H1 (cell line): ENCODE measurements at regions of chr5 and their contacts with region 1.

Region 1: GRCh38 chr5:10452768-10453331 is 11.2 kb downstream of the ROPN1L start:
- DNase-seq: no peak
- H3K4me3 ChIP-seq: no peak overlapping the region
- H3K27ac ChIP-seq: no peak overlapping the region
- H3K4me1 ChIP-seq: peaks cover 3 to 14% (median 7%) of the 10 kb centered on the region in 4 experiments
- H3K27me3 ChIP-seq: no peaks in the 10 kb centered on the region
- CTCF ChIP-seq: peak in 2 of 3 experiments; percentile 74 to 79; a peak in 3 of 4 replicates
- EP300 ChIP-seq: no peak
- POLR2A ChIP-seq: no peak
- RAD21 ChIP-seq: peak; percentile 98 to 99

Region 2: DNA sequence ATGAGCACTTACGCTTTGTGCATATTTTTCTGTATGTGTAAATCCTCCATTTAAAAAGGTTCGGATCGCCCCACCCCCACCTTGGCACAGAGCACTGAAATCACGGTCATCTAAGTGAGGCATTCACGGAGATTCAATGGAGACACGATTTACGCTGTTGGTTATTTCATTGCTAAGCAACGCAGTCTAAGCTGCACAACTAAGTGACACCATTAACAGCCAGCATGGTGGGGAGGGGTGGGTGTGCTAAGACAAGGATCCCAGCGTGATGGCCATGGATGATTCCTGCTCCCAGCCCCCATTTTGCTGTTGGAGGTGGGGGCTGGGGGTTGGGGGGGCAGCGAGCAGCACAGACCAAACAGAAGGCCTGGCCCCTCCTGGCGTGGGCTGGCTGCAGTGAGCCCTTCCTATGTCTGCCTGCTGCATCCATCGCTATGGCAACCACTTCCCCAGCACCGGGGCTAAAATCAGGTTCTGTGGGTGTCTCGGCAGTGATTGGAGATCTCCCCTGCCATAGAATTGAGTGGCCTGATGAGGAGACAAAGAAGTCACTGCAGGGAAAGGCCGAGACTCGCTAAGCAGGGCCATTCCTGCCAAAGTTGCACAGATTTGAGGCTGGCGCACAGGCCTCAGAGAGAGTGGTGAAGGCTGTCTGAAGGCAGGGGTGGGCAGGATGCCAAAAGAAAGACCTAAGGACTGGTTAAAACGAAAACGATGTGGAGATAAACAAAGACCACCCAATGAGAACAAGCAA is 113.6 kb before region 1 on chr5:
- CTCF ChIA-PET with region 1: no interaction called
- POLR2A ChIA-PET with region 1: no interaction called
- DNase-seq: no peak
- H3K4me3 ChIP-seq: no peak overlapping the region
- H3K27ac ChIP-seq: no peak overlapping the region
- H3K4me1 ChIP-seq: peaks cover 0 to 14% (median 5%) of the 10 kb centered on the region in 4 experiments; a peak in 4 of 7 replicates
- H3K27me3 ChIP-seq: peaks cover 7 to 10% (median 8%) of the 10 kb centered on the region in 4 experiments
- CTCF ChIP-seq: no peak
- EP300 ChIP-seq: no peak
- POLR2A ChIP-seq: no peak
- RAD21 ChIP-seq: no peak

Region 3: DNA sequence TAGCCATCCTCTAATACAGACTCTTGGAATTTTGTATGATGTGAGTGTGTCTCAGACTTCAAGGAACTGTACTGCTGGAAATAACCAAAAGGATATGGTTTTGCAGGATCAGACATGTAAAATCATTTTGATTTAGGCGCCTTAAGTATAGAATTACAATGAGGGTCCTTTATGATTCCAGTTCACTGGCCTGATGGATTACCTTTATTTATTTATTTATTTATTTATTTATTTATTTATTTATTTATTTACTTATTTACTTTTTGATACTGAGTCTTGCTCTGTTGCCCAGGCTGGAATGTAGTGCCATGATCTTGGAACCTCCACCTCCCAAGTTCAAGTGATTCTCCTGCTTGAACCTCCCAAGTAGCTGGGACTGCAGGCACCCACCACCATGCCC is 49.0 kb before region 1 on chr5:
- CTCF ChIA-PET with region 1: no interaction called
- POLR2A ChIA-PET with region 1: no interaction called
- DNase-seq: no peak
- H3K4me3 ChIP-seq: no peak overlapping the region
- H3K27ac ChIP-seq: no peak overlapping the region
- H3K4me1 ChIP-seq: no peaks in the 10 kb centered on the region
- H3K27me3 ChIP-seq: no peaks in the 10 kb centered on the region
- CTCF ChIP-seq: no peak
- EP300 ChIP-seq: no peak
- POLR2A ChIP-seq: no peak
- RAD21 ChIP-seq: no peak

Region 4: DNA sequence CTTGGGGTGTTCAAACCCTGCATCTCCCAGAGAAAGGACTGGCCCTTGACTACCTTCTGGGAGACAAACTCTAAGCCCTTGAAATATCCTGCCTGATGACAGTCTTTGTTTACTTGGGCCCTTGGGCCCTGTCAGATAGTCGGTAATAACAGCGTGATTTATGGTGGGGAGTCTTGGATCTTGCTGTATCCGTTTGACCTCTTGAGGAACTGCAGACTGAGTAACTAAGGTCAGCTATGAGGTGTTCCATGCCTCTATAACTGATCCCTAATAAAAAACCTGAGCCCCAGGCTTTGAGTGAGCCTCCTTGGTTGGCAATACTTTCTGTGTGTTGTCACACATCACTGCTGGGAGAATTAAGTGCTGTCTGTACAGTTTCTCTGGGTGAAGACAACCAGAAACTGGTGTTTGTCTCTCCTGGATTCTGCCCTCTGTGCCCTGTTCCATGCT is 54.8 kb after region 1 on chr5:
- CTCF ChIA-PET with region 1: interaction called, 29 read pairs
- POLR2A ChIA-PET with region 1: no interaction called
- DNase-seq: no peak
- H3K4me3 ChIP-seq: no peak overlapping the region
- H3K27ac ChIP-seq: no peak overlapping the region
- H3K4me1 ChIP-seq: peaks cover 0 to under 1% (median 0%) of the 10 kb centered on the region in 4 experiments; a peak in 2 of 7 replicates
- H3K27me3 ChIP-seq: no peaks in the 10 kb centered on the region
- CTCF ChIP-seq: no peak
- EP300 ChIP-seq: no peak
- POLR2A ChIP-seq: no peak
- RAD21 ChIP-seq: no peak

Region 5: DNA sequence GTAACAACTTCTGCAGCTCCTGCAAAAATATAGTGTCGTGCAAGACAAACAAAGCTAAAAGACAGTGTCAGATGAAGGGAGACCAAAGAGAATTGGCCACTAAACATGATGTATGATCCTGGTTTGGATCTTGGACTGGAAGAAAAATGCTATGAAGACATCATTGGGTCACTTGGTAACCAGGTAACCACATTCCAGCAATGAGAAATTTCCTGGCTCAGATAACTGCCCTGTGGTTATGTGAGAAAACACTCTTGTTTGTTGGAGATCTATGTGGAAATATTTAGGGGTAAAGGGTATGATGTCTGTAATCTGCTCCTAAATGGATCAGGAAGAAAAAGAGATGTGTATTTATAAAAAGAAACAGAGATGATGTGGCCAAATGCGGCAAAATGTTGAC is 65.5 kb after region 1 on chr5:
- CTCF ChIA-PET with region 1: no interaction called
- POLR2A ChIA-PET with region 1: no interaction called
- DNase-seq: no peak
- H3K4me3 ChIP-seq: no peak overlapping the region
- H3K27ac ChIP-seq: no peak overlapping the region
- H3K4me1 ChIP-seq: peaks cover 0 to 8% (median 6%) of the 10 kb centered on the region in 4 experiments; a peak in 4 of 7 replicates
- H3K27me3 ChIP-seq: no peaks in the 10 kb centered on the region
- CTCF ChIP-seq: no peak
- EP300 ChIP-seq: no peak
- POLR2A ChIP-seq: no peak
- RAD21 ChIP-seq: no peak

Region 6: GRCh38 chr5:10577371-10578292 is 124.8 kb after region 1 on chr5:
- CTCF ChIA-PET with region 1: interaction called, 31 read pairs
- POLR2A ChIA-PET with region 1: no interaction called
- DNase-seq: no peak
- H3K4me3 ChIP-seq: no peak overlapping the region
- H3K27ac ChIP-seq: no peak overlapping the region
- H3K4me1 ChIP-seq: peaks cover 0 to 5% (median 3%) of the 10 kb centered on the region in 4 experiments; a peak in 4 of 7 replicates
- H3K27me3 ChIP-seq: no peaks in the 10 kb centered on the region
- CTCF ChIP-seq: no peak
- EP300 ChIP-seq: no peak
- POLR2A ChIP-seq: no peak
- RAD21 ChIP-seq: no peak

Region 7: DNA sequence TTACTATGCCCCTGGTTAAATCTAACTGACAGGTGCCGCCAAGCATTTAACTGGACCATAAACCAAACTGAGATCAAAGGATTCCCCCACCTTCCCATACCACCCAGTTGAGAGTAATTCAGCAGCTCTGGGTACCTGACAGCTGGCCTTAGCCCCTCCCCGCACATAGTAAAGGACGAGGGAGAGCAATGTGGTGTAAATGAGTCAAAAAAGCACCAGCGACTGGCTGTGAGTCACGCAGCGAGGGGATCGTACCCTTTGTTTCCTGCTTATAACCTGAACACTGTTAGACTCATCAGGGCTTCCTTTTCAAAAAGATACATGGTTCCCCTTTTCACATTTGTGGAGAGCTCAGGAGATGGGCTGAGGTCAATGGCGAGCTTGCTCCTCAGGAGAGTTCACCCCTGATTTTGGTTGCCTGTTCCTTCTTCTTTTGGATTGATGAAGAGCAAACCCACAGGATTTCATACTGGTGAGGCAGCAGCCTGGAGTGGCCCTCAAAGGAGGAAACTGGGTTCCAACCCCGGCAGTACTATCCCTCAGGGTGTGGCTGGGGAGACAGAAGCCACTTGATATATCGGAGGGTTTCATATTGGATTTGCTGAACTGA is 182.5 kb after region 1 on chr5:
- CTCF ChIA-PET with region 1: interaction called, 199 read pairs
- POLR2A ChIA-PET with region 1: interaction called, 5 read pairs
- DNase-seq: peak in 1 of 2 experiments; percentile 49
- H3K4me3 ChIP-seq: no peak overlapping the region
- H3K27ac ChIP-seq: no peak overlapping the region
- H3K4me1 ChIP-seq: peaks cover 18 to 50% (median 36%) of the 10 kb centered on the region in 4 experiments
- H3K27me3 ChIP-seq: no peaks in the 10 kb centered on the region
- CTCF ChIP-seq: no peak
- EP300 ChIP-seq: no peak
- POLR2A ChIP-seq: no peak
- RAD21 ChIP-seq: no peak

Region 8: GRCh38 chr5:10695055-10695649 is 242.3 kb after region 1 on chr5:
- CTCF ChIA-PET with region 1: interaction called, 132 read pairs
- POLR2A ChIA-PET with region 1: interaction called, 3 read pairs
- DNase-seq: peak in 1 of 2 experiments; percentile 76
- H3K4me3 ChIP-seq: no peak overlapping the region
- H3K27ac ChIP-seq: no peak overlapping the region
- H3K4me1 ChIP-seq: peaks cover 0 to 3% (median 2%) of the 10 kb centered on the region in 4 experiments; a peak in 3 of 7 replicates
- H3K27me3 ChIP-seq: no peaks in the 10 kb centered on the region
- CTCF ChIP-seq: peak; percentile 85 to 88 (median 88)
- EP300 ChIP-seq: no peak
- POLR2A ChIP-seq: no peak
- RAD21 ChIP-seq: peak; percentile 92 to 94